ENCODE measurements at regions of chr10 and their contacts with region 1.

Region 1: GRCh38 chr10:73552819-73553715 is 38.1 kb downstream of the USP54 start:
- DNase-seq: peak in 9 of 10 donors; percentile 50 to 96 (median 77)

Region 2: GRCh38 chr10:73586583-73586984 is 33.5 kb after region 1 on chr10:
- intact Hi-C with region 1: loop called (anchors 5 kb)
- DNase-seq: no peak